ENCODE measurements at regions of chr1 and their contacts with region 1.

Region 1: DNA sequence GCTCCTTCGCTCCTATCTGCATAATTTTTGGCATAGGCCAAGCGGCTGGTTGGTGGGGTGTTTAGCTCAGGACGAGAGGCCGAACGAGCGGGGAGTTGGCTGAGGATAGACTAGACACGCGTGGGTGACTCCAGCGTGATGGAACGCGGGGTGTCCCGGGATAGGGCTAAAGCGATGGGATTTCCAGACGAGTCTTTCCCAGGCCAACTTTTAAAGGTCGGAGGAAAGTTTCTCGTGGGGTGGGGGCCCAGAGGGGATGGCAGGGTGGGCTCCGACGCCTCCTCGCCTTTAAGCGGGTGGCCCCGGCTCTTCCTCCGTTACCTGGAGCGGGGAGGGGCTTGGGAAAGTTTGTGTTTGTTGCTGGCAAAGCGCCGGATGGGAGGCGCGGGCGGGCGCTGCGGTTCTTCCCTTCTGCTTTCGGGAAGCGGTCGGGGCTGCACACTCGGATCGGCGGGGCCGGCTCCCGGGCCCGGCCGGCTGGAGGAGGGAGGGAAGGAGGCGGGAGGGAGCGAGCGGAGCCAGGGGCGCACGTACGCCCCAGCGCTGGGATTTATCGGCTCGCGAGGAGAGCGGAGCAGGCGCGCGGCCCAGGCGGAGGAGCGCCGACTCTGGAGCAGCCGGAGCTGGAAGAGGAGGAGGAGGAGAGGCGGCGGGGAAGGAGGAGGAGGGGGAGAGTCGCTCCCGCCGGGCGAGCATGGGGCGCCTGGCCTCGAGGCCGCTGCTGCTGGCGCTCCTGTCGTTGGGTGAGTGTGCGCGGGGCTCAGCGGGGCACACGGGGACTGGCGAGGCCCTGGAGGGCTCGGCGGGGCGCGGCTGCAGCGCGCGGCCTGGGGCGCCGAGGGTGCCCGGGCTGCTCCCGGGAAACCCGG is at the start of gene PTGFRN:
- DNase-seq: peak; percentile 89
- H3K4me3 ChIP-seq: peak within 1 kb of the TSS; percentile 65 to 88 (median 78)
- H3K27ac ChIP-seq: peak within 1 kb of the TSS; percentile 92 to 98 (median 94)
- H3K4me1 ChIP-seq: peaks cover 0 to 55% (median 50%) of the 10 kb centered on the region in 4 donors
- H3K27me3 ChIP-seq: no peaks in the 10 kb centered on the region
- CTCF ChIP-seq: no peak
- EP300 ChIP-seq: no peak
- POLR2A ChIP-seq: peak; percentile 44 to 64
- total RNA-seq, gene PTGFRN: 77.3 to 179 (median 109) TPM

Region 2: GRCh38 chr1:116372587-116373444 is 536.9 kb before region 1 on chr1 and contains the start of gene ATP1A1:
- intact Hi-C with region 1: loop called (anchors 10 kb)
- DNase-seq: peak; percentile 98
- H3K4me3 ChIP-seq: peak within 1 kb of the TSS; percentile 63 to 99 (median 96)
- H3K27ac ChIP-seq: peak within 1 kb of the TSS; percentile 80 to 98 (median 95)
- H3K4me1 ChIP-seq: peaks cover 0 to 45% (median 39%) of the 10 kb centered on the region in 4 donors
- H3K27me3 ChIP-seq: no peaks in the 10 kb centered on the region
- CTCF ChIP-seq: peak in 1 of 4 experiments; percentile 11
- EP300 ChIP-seq: no peak
- POLR2A ChIP-seq: peak; percentile 69 to 81
- total RNA-seq, gene ATP1A1: 88.6 to 101 (median 91.8) TPM

Region 3: DNA sequence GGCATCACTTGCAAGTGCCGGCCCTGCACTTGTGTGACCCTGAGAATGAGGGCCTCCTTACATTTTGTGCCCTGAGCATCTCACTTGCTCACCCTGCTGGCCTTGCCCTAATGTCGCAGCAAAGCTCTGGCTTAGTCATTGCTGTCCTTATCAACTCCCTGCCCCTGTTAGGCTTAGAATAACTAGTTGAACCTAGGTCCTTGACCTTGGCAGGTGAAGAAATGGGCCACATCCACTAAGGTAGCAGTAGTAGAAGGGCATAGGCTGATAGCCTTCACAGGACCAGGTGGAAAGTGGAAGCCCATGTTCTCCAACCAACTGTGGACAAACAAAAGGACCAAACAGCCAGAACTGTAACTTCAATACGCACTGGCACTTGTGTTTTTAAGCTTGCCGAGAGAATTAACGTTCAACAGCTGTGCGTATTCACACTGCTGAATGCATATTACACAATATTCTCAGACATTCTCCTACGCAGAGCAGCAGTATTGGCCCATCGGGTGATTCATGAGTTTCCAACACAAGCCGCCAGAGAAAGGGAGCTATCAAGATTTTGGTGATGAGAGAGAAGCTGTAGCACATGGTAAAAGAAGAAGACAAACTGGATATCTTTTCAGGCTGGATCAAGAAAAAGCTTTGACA is 27.7 kb before region 1 on chr1:
- intact Hi-C with region 1: loop called (anchors 2 kb)
- DNase-seq: peak; percentile 85
- H3K4me3 ChIP-seq: no peak overlapping the region
- H3K27ac ChIP-seq: peak overlapping the region; percentile 38 to 74 (median 60)
- H3K4me1 ChIP-seq: peaks cover 0 to 40% (median 26%) of the 10 kb centered on the region in 4 donors
- H3K27me3 ChIP-seq: no peaks in the 10 kb centered on the region
- CTCF ChIP-seq: no peak
- EP300 ChIP-seq: peak in 1 of 4 donors; percentile 22
- POLR2A ChIP-seq: no peak

Region 4: GRCh38 chr1:116987256-116987555 is 77.5 kb after region 1 on chr1:
- intact Hi-C with region 1: loop called (anchors 1 kb)
- DNase-seq: no peak
- H3K4me3 ChIP-seq: no peak overlapping the region
- H3K27ac ChIP-seq: peak overlapping the region in 3 of 4 donors; percentile 30 to 84 (median 69)
- H3K4me1 ChIP-seq: peaks cover 0 to 78% (median 58%) of the 10 kb centered on the region in 4 donors
- H3K27me3 ChIP-seq: no peaks in the 10 kb centered on the region
- CTCF ChIP-seq: no peak
- EP300 ChIP-seq: no peak
- POLR2A ChIP-seq: no peak

Region 5: DNA sequence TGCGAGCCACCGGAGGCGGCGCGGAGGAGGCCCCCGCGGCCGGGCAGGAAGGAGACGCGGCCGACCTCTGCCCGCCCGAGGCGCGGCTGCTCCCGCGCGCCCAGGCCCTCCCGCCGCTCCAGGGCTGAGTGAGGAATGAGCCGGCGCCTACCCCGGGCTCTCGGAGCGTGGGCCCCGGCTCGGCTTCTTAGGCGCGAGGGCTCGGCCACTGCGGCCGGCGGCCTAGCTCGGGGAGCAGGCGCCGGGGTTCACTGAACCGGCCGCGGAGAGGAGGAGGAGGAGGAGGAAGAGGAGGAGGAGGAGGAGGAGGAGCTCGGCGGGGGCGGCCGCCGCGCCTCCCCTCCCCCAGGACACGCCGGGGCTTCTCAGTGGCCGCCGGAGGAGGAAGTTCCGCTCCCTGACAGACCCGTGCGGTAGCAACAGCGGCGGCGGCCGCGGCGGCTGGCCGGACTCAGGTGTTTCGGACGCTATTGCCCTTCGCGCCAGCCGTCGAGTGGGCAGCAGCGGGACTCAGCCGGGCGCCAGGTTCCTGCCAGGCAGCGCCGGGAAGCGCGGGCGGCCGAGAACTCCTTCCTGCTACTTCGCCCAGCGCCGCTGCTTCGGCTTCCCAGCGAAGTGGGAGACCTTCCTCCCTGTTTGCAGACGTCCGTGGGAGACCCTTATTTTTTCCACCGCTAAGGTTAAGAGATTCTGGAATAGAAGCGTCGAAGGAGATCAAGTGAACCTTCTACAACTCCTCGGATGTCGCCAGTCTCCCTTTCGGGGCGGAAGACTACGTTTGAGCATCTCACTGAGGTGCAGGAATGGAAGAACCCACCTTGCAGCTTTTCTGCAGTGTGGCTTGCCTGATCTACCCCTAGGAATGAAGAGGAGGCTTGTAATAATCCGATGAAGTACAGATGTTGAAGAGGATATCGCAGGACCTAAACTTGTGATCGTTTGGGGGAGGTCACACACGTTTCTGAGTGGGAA is 457.6 kb after region 1 on chr1 and contains the start of gene MAN1A2:
- intact Hi-C with region 1: loop called (anchors 5 kb)
- DNase-seq: peak; percentile 95
- H3K4me3 ChIP-seq: peak within 1 kb of the TSS; percentile 79 to 88 (median 83)
- H3K27ac ChIP-seq: peak within 1 kb of the TSS; percentile 97 to 99 (median 98)
- H3K4me1 ChIP-seq: peaks cover 0 to 66% (median 54%) of the 10 kb centered on the region in 4 donors
- H3K27me3 ChIP-seq: no peaks in the 10 kb centered on the region
- CTCF ChIP-seq: no peak
- EP300 ChIP-seq: no peak
- POLR2A ChIP-seq: peak; percentile 65 to 82
- total RNA-seq, gene MAN1A2: 36.8 to 52.8 (median 43.4) TPM

Measured in sigmoid colon (tissue), 7 donors.